A673 (cell line): ENCODE measurements at regions of chr20 and their contacts with region 1.

Region 1: DNA sequence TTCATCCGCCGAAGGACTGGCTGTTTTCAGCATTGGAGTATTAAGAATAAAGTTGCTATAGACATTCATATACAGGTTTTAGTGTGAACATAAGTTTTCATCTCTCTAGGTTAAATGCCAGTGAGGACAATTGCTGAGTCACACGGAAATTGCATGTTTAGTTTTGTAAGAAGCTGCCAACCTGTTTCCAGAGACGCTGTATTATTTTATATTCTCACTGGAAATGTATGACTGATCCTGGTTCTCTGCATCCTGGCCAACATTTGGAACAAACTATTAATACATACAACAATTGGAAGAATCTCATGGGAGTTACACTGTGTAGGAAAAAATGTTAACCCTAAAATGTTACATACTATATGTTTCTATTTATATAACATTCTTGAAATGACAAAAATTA is 16.7 kb upstream of the TGM6 start:
- DNase-seq: no peak
- H3K4me3 ChIP-seq: no peak overlapping the region
- H3K27ac ChIP-seq: no peak overlapping the region
- H3K4me1 ChIP-seq: no peaks in the 10 kb centered on the region
- H3K27me3 ChIP-seq: no peaks in the 10 kb centered on the region
- CTCF ChIP-seq: no peak

Region 2: DNA sequence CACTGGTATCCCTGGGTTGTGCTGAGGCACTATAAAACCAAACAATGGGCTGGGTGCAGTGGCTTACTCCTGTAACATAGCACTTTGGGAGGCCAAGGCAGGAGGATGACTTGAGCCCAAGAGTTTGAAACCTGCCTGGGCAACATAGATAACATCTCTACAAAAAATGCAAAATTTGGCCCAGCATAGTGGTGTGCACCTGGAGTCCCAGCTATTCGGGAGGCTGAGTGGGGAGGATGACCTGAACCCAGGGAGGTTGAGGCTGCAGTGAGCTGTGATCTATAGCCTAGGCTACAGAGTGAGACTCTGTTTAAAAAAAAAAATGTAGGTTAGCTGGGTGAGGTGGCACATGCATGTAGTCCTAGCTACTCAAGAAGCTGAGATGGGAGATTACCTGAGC is 882.6 kb after region 1 on chr20:
- CTCF ChIA-PET with region 1: no interaction called
- POLR2A ChIA-PET with region 1: interaction called, 11 read pairs
- intact Hi-C with region 1: no loop called
- DNase-seq: no peak
- H3K4me3 ChIP-seq: no peak overlapping the region
- H3K27ac ChIP-seq: no peak overlapping the region
- H3K4me1 ChIP-seq: peaks cover 10% of the 10 kb centered on the region
- H3K27me3 ChIP-seq: no peaks in the 10 kb centered on the region
- CTCF ChIP-seq: no peak